Adrenal gland (tissue), 19 donors: ENCODE measurements at regions of chr1 and their contacts with region 1.

Region 1: GRCh38 chr1:202710070-202711045 is at the start of gene SYT2:
- DNase-seq: peak; percentile 22 to 69 (median 33)
- H3K4me3 ChIP-seq: peak within 1 kb of the TSS in 1 of 4 donors; percentile 41
- H3K27ac ChIP-seq: no peak within 1 kb of the TSS
- H3K4me1 ChIP-seq: peaks cover 12 to 15% of the 10 kb centered on the region in 2 donors
- H3K27me3 ChIP-seq: peaks cover 50% of the 10 kb centered on the region
- CTCF ChIP-seq: no peak
- POLR2A ChIP-seq: no peak
- total RNA-seq, gene SYT2: 0.08 to 3.8 (median 0.36) TPM in 6 of 9 donors, not detected in the others

Region 2: GRCh38 chr1:202184750-202185460 is 525.5 kb before region 1 on chr1:
- intact Hi-C with region 1: loop called in 1 of 2 experiments (anchors 10 kb)
- DNase-seq: peak; percentile 79 to 93 (median 89)
- H3K4me3 ChIP-seq: no peak overlapping the region
- H3K27ac ChIP-seq: peak overlapping the region in 2 of 5 donors; percentile 21 to 35
- H3K4me1 ChIP-seq: peaks cover 0 to 3% of the 10 kb centered on the region in 2 donors
- H3K27me3 ChIP-seq: peaks cover 4% of the 10 kb centered on the region
- CTCF ChIP-seq: peak; percentile 66 to 82 (median 70)
- POLR2A ChIP-seq: no peak

Region 3: DNA sequence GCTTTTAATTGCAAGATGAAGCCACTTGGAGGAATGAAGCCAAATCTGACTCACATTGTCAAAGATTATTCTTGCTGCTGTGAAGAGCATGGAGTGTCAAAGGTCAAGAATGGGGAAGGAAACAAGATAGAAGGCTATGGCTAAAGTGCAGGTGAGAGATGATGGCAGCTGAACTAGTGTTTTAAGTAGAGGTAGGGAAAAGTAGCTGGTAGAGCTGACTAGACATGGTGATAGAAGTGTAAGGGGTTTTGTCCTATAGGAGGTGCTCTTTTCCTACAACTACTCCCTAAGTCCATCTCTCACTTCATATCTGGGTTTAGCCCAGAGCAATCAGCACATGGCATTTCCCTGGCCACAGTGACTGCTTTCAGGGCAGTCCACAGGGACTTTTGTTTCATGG is 380.5 kb before region 1 on chr1:
- intact Hi-C with region 1: loop called in 1 of 2 experiments (anchors 10 kb)
- DNase-seq: peak in 1 of 7 donors; percentile 24
- H3K4me3 ChIP-seq: no peak overlapping the region
- H3K27ac ChIP-seq: no peak overlapping the region
- H3K4me1 ChIP-seq: no peaks in the 10 kb centered on the region
- H3K27me3 ChIP-seq: no peaks in the 10 kb centered on the region
- CTCF ChIP-seq: no peak
- POLR2A ChIP-seq: no peak

Region 4: DNA sequence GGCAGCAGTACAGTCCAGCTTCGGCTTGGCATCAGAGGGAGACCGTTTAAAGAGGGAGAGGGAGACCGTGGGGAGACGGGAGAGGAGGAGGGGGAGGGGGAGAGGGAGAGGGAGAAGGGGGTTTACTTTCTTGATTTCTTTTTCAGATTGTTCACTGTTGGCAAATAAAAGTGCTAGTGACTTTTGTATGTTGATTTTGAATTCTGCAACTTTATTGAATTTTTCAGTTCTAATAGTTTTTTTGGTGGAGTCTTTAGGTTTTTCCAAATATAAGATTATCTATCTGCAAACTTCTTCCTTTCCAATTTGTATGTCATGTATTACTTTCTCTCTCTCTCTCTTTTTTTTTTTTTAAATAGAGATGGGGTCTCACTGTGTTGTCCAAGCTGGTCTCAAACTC is 257.9 kb before region 1 on chr1:
- intact Hi-C with region 1: loop called in 1 of 2 experiments (anchors 10 kb)
- DNase-seq: no peak
- H3K4me3 ChIP-seq: no peak overlapping the region
- H3K27ac ChIP-seq: no peak overlapping the region
- H3K4me1 ChIP-seq: no peaks in the 10 kb centered on the region
- H3K27me3 ChIP-seq: no peaks in the 10 kb centered on the region
- CTCF ChIP-seq: no peak
- POLR2A ChIP-seq: no peak

Region 5: GRCh38 chr1:203229471-203230135 is 519.2 kb after region 1 on chr1 and contains the start of gene CHIT1:
- intact Hi-C with region 1: no loop called
- DNase-seq: peak in 1 of 7 donors; percentile 7
- H3K4me3 ChIP-seq: no peak within 1 kb of the TSS
- H3K27ac ChIP-seq: no peak within 1 kb of the TSS
- H3K4me1 ChIP-seq: no peaks in the 10 kb centered on the region
- H3K27me3 ChIP-seq: no peaks in the 10 kb centered on the region
- CTCF ChIP-seq: no peak
- POLR2A ChIP-seq: no peak
- total RNA-seq, gene CHIT1: 0.14 to 2.9 (median 0.55) TPM in 8 of 9 donors, not detected in the other